ENCODE measurements at regions of chr12 and their contacts with region 1.

Region 1: DNA sequence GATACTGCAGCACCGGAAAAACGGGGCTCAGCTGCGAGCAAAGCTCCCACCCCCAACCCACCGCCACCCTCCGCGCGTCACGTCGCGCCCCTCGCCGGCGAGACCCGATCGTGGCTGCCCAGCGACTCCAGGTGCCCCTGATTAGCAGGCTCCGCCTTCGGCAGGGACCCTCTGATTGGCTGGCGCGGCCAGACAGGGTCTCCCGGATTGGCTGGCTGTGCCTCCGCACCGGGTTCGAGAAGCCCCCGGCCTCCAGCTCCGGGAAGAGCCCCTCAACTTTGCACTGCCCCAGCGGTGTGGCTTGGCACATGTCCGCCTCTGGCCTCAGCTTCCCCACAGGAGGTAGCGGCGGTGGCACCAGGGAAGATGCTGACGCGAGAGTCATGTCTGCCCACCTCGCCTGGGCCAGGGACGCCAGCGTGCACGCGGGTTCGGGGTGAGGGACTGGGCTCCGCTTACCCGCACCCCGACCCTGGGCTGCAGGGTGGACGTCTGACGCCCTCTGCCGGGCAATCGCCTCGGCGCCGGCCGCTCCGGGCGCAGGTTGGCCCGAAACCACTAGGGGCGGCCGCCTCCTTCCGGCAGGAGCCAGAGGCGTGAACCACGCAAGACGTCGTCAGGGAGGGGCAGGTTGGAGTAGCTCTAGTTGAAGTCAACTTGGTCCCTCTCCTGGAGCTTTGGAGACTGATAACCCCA is 498 bp upstream of the RHOF start:
- DNase-seq: peak; percentile 96
- H3K4me3 Mint-ChIP-seq: peak overlapping the region; percentile 84
- H3K27ac Mint-ChIP-seq: peak overlapping the region; percentile 94
- H3K4me1 Mint-ChIP-seq: peaks cover 57% of the 10 kb centered on the region
- H3K27me3 Mint-ChIP-seq: no peaks in the 10 kb centered on the region

Region 2: GRCh38 chr12:121697098-121697698 is 96.8 kb before region 1 on chr12:
- intact Hi-C with region 1: loop called (anchors 1 kb)
- DNase-seq: no peak
- H3K4me3 Mint-ChIP-seq: no peak overlapping the region
- H3K27ac Mint-ChIP-seq: no peak overlapping the region
- H3K4me1 Mint-ChIP-seq: peaks cover 1% of the 10 kb centered on the region
- H3K27me3 Mint-ChIP-seq: peaks cover 6% of the 10 kb centered on the region

Region 3: DNA sequence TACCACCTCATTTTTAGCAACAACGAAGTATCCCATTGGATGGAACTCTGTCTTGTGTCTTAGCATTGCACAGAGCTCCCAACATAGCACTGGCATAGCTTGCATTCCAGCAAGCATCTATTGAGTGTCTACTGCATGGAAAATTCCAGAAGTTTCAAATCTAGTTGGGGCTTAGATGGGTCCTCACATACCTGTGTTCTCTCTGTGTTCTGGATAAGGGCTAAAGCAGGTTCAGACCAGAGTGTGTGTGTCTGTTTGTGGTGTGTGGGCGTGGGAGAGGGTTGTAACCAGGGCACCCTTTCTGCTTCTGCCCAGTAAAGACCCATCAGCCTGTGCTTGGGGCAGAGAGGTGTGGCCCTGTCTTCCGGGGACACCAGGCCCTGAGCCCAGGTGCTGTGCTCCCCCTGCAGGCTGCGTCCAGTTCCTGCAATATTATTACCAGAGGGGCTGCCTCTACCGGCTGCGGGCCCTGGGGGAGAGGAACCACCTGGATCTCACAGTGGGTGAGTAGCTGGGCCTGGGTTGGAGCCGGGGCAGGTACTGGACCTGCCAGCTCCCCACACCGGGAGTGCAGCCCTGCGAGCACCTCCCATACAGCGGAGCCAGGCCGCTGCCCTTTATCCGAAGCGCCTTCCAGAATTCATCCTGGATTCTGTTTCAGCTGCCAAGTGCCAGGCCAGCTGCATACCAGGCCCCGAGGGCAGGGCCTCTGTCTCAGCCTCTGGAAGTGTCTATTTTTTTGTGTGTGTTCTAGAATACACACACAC is 20.8 kb before region 1 on chr12:
- intact Hi-C with region 1: loop called (anchors 1 kb)
- DNase-seq: peak; percentile 74
- H3K4me3 Mint-ChIP-seq: no peak overlapping the region
- H3K27ac Mint-ChIP-seq: peak overlapping the region; percentile 71
- H3K4me1 Mint-ChIP-seq: peaks cover 9% of the 10 kb centered on the region
- H3K27me3 Mint-ChIP-seq: no peaks in the 10 kb centered on the region

Region 4: DNA sequence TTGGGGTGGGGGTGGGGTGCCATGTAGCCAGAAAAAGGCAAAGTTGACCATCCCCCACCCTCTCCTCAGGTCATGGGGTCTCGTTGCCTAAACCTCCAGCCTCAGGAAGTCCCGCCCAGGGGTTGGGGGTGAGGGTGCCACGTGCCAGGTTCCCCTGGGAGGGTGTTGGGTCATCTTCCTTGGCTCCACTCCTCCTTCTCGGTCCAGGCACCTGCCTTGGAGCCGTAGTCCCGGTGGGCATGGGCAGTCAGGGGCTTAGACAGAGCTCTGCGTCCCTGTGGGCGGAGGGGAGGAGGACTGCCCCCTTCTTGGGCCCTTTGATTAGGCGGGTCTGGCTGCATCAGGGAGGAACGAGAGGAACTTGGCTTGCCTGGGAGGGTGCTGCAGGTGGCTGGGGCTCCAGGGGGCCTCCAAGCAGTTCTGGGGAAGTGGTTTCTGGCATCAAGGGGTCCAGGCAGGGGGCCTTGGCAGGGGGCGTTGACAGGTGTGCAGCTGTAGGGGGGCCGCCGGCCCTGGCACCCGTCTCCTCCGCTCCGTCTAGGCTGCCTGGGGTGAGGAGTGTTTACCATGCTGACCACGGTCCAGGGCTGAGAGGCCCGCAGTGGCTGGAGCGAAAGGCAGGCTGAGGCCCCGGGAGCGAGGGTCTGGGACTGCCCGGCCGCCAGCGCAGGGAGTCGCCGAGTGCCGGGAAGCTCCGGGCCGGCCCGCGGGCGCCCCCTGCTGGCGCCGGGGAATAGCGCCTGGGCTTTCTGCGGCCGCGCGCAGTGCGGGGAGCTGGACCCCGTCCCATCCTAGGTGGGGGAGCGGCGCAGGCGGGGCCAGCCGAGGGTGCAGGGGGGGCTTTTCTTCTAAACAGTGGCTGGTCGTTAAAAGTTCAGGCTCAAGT is 17.7 kb after region 1 on chr12:
- intact Hi-C with region 1: loop called (anchors 1 kb)
- DNase-seq: peak; percentile 62
- H3K4me3 Mint-ChIP-seq: peak overlapping the region; percentile 71
- H3K27ac Mint-ChIP-seq: no peak overlapping the region
- H3K4me1 Mint-ChIP-seq: peaks cover 31% of the 10 kb centered on the region
- H3K27me3 Mint-ChIP-seq: no peaks in the 10 kb centered on the region

Region 5: DNA sequence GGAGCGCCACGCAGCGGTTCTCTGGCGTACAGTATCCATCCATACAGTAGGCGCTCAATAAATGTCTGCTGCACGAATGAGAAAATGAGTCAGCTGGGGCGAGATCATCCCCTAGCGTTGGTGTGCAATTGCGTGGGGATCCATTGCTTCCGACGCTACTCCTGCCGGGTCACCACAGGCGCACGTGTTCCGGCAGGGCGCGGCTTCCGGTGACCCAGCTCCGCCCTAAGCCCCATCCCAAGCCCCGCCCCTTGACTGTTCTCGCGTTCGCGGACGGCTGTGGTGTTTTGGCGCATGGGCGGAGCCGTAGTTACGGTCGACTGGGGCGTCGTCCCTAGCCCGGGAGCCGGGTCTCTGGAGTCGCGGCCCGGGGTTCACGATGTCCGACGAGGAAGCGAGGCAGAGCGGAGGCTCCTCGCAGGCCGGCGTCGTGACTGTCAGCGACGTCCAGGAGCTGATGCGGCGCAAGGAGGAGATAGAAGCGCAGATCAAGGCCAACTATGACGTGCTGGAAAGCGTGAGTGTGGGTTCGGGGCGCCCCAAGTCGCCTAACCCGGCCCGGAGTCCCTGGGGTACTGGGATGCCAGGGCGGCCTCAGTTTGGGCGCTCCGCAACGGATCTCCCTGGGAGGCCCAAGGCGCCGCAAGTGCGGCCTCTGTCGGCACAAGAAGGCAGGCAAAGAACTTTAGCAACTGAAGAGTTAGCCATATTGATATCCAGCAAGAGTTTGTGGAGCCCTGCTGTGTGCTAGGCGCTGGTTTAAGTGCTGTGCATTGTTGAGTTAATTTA is 94.7 kb after region 1 on chr12 and contains the start of gene PSMD9:
- intact Hi-C with region 1: loop called (anchors 1 kb)
- DNase-seq: peak; percentile 98
- H3K4me3 Mint-ChIP-seq: peak within 1 kb of the TSS; percentile 99
- H3K27ac Mint-ChIP-seq: peak within 1 kb of the TSS; percentile 99
- H3K4me1 Mint-ChIP-seq: peaks cover 22% of the 10 kb centered on the region
- H3K27me3 Mint-ChIP-seq: peaks cover 1% of the 10 kb centered on the region
- total RNA-seq, gene PSMD9: 65.2 and 71.0 TPM in 2 replicates

Measured in activated T-helper 2 cell treated with anti-CD3 and anti-CD28 coated beads, Interferon-gamma antibody, Interleukin-2, Interleukin-4, amounts not matched to agents 10 μg/mL and 5 μg/mL and 100 μg/mL, durations not matched to agents 14 hours and 24 hours and 36 hours (primary cell).